ENCODE measurements at regions of chr5 and their contacts with region 1.

Region 1: GRCh38 chr5:138985256-138985655 is 110.1 kb upstream of the LRRTM2 start:
- DNase-seq: peak; percentile 34 to 61
- H3K4me3 ChIP-seq: no peak overlapping the region
- H3K27ac ChIP-seq: peak overlapping the region; percentile 21; the same call in 1 of the 2 replicates
- H3K4me1 ChIP-seq: 0 out of 2 replicates have a peak, but pooled peaks cover 7% of the 10 kb centered on the region
- H3K27me3 ChIP-seq: no peaks in the 10 kb centered on the region
- CTCF ChIP-seq: no peak

Region 2: DNA sequence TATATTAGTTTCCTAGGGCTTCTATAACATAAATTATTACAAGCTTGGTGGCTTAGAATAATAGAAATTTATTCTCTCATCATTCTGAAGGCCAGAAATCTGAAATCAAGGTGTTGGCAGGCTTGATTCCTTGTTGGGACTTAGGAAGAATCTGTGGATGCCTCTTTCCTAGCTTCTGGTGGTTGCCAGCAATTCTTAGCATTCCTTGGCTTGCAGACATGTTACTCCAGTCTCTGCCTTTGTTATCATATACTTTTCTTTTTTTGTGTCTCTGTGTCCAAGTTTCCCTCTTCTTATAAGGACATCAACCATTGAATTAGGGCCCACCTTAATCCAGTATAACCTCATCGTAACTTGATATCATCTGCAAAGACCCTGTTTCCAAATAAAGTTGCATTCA is 200.7 kb before region 1 on chr5:
- CTCF ChIA-PET with region 1: interaction called, 5 read pairs
- POLR2A ChIA-PET with region 1: interaction called, 18 read pairs
- intact Hi-C with region 1: no loop called
- DNase-seq: no peak
- H3K4me3 ChIP-seq: no peak overlapping the region
- H3K27ac ChIP-seq: no peak overlapping the region
- H3K4me1 ChIP-seq: no peaks in the 10 kb centered on the region
- H3K27me3 ChIP-seq: no peaks in the 10 kb centered on the region
- CTCF ChIP-seq: no peak